ENCODE measurements at regions of chr18 and their contacts with region 1.

Region 1: DNA sequence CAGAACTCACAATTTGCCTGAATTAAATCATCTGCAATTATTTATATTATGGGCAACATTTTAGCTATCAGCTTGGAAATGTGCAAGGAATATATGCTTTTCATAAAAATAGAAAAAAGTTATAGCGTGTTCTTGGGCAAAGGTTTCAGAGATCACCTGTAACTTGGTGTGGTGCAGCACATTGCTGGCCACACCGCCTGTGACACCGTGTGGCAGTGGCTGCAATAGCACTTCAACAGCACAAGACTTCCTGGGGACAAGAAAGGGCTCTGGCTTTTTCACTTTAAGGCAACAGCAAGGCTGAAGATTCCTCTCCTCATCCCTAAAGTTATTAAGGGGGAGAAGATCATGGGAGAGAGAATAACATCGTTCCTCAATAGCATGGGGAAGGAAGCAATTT is 14.8 kb upstream of the SERPINB3 start:
- DNase-seq: peak; percentile 35
- H3K4me3 ChIP-seq: no peak overlapping the region
- H3K27ac ChIP-seq: no peak overlapping the region
- H3K4me1 ChIP-seq: peaks cover 8% of the 10 kb centered on the region
- H3K27me3 ChIP-seq: no peaks in the 10 kb centered on the region
- CTCF ChIP-seq: peak; percentile 78 to 85

Region 2: DNA sequence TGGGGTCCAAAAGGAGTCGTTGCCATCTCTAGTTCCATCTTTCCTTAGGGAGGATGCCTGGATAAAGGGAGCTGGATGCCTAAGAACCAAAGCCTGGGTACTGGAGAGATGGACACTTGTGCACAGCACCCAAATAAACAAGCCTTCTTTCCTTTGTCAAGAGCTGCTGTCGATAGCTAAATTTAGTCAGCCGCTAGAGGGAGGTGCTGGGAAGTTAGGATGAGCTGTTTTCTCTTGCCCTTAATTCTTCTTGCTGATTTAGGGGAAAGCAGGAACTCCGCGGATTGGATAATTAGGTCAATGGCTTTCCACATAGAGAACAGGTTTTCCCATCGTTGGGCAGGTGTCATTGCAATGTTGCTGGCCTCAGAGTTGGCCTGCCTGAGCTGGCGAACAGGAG is 165.2 kb before region 1 on chr18:
- CTCF ChIA-PET with region 1: interaction called, 15 read pairs
- dilution Hi-C with region 1: no loop called
- in situ Hi-C with region 1: no loop called
- intact Hi-C with region 1: no loop called
- DNase-seq: no peak
- H3K4me3 ChIP-seq: no peak overlapping the region
- H3K27ac ChIP-seq: no peak overlapping the region
- H3K4me1 ChIP-seq: no peaks in the 10 kb centered on the region
- H3K27me3 ChIP-seq: no peaks in the 10 kb centered on the region
- CTCF ChIP-seq: peak; percentile 71 to 84

Region 3: GRCh38 chr18:63578357-63578958 is 98.1 kb before region 1 on chr18:
- CTCF ChIA-PET with region 1: no interaction called
- dilution Hi-C with region 1: no loop called
- in situ Hi-C with region 1: no loop called
- intact Hi-C with region 1: loop called (anchors 1 kb)
- DNase-seq: no peak
- H3K4me3 ChIP-seq: no peak overlapping the region
- H3K27ac ChIP-seq: no peak overlapping the region
- H3K4me1 ChIP-seq: no peaks in the 10 kb centered on the region
- H3K27me3 ChIP-seq: no peaks in the 10 kb centered on the region
- CTCF ChIP-seq: peak; percentile 77 to 83

Region 4: DNA sequence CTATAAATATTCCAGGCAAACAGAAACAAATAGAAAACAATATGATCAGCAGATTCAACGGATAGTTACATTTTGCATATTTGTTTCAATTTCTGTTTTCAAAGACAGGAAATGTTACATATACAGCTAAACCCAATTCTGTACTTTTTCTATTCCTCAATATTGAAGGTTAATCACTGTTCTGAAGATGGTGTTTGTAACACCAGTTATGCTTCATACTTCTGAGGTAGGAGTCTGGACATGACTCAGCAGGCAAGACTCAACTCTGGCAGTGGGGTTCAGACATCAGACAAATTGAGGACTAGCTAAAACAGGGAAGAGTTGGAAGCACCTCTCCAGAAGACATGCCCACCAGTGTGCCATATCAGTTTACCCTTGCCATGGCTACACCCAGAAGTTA is 72.8 kb before region 1 on chr18:
- CTCF ChIA-PET with region 1: no interaction called
- dilution Hi-C with region 1: no loop called
- in situ Hi-C with region 1: no loop called
- intact Hi-C with region 1: loop called (anchors 5 kb)
- DNase-seq: peak; percentile 82
- H3K4me3 ChIP-seq: no peak overlapping the region
- H3K27ac ChIP-seq: peak overlapping the region; percentile 87
- H3K4me1 ChIP-seq: peaks cover 25% of the 10 kb centered on the region
- H3K27me3 ChIP-seq: no peaks in the 10 kb centered on the region
- CTCF ChIP-seq: no peak

Region 5: DNA sequence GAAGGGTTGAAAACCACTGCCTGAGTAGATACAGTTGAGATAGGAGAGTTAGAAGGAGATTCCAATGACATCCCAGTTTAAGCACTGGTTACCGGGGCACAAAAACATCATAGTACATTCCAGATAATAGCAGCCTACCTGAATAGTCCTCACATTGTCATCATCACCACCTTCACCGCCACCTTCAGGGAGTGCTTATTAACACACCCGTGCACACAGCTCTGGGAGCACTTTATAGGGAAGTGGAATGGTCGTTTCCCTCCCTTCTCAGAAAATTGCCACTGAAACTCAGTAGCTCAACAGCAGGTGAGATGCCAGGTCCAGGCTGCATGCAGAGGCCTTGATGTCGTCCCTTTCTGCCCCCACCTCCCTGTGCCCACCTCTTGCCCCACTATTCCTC is 106.9 kb after region 1 on chr18:
- CTCF ChIA-PET with region 1: no interaction called
- dilution Hi-C with region 1: no loop called
- in situ Hi-C with region 1: no loop called
- intact Hi-C with region 1: loop called (anchors 2 kb)
- DNase-seq: peak; percentile 53
- H3K4me3 ChIP-seq: no peak overlapping the region
- H3K27ac ChIP-seq: peak overlapping the region; percentile 35
- H3K4me1 ChIP-seq: peaks cover 25% of the 10 kb centered on the region
- H3K27me3 ChIP-seq: no peaks in the 10 kb centered on the region
- CTCF ChIP-seq: peak; percentile 60 to 65

Measured in mammary epithelial cell (primary cell).